ENCODE measurements at regions of chr2 and their contacts with region 1.

Region 1: GRCh38 chr2:207529330-207530159 is at the start of gene CREB1:
- DNase-seq: peak; percentile 94
- ATAC-seq: peak; percentile 96
- H3K4me3 ChIP-seq: peak within 1 kb of the TSS; percentile 93 to 98 (median 94)
- H3K27ac ChIP-seq: peak within 1 kb of the TSS; percentile 96
- H3K4me1 ChIP-seq: peaks cover 44% of the 10 kb centered on the region
- H3K27me3 ChIP-seq: no peaks in the 10 kb centered on the region; a peak in 1 of 5 replicates
- CTCF ChIP-seq: peak; percentile 73
- EP300 ChIP-seq: no peak; a peak in 1 of 4 replicates
- POLR2A ChIP-seq: peak; percentile 90 to 94
- RAD21 ChIP-seq: peak; percentile 30
- total RNA-seq, gene CREB1: 51.9 and 79.5 TPM in 2 replicates

Region 2: DNA sequence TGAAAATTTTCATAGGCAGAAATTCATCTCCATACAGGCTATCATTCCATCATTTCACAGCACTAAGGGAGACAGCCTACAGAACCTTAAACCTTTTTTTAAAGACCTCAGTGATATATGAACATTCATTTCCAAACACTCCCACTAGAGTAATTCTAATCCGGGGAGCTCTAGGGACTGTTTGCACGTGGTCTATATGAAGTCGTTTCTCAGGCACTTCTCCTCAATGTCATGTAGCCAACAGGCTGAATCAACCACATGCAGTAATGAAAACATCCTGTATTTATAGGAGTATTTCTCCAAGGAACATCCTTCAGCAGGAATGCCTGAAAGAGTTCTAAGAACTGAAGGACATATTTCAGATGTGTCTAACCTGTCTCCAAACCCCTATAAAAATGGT is 97.1 kb before region 1 on chr2:
- CTCF ChIA-PET with region 1: no interaction called
- POLR2A ChIA-PET with region 1: no interaction called
- in situ Hi-C with region 1: no loop called
- intact Hi-C with region 1: no loop called
- DNase-seq: no peak
- ATAC-seq: no peak
- H3K4me3 ChIP-seq: no peak overlapping the region
- H3K27ac ChIP-seq: no peak overlapping the region
- H3K4me1 ChIP-seq: no peaks in the 10 kb centered on the region
- H3K27me3 ChIP-seq: no peaks in the 10 kb centered on the region
- CTCF ChIP-seq: no peak
- EP300 ChIP-seq: no peak
- POLR2A ChIP-seq: no peak
- RAD21 ChIP-seq: no peak

Region 3: DNA sequence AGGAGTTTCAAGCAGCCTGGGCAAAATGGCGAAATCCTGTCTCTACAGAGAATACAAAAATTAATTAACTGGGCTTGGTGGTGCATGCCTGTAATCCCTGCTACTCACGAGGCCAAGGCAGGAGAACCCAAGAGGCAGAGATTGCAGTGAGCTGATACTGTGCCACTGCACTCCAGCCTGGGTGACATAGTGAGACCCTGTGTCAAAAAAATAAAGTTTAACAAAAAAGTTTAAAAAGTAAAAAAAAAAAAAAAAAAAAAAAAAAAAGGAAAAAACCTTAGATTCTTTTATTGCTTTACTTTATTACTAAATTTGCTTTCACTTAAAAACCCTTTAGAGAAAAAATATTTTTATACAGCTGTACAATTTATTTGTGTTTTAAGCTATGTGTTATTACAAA is 10.9 kb after region 1 on chr2:
- CTCF ChIA-PET with region 1: no interaction called
- POLR2A ChIA-PET with region 1: interaction called, 23 read pairs
- in situ Hi-C with region 1: no loop called
- intact Hi-C with region 1: no loop called
- DNase-seq: no peak
- ATAC-seq: peak; percentile 49
- H3K4me3 ChIP-seq: no peak overlapping the region
- H3K27ac ChIP-seq: no peak overlapping the region
- H3K4me1 ChIP-seq: no peaks in the 10 kb centered on the region
- H3K27me3 ChIP-seq: no peaks in the 10 kb centered on the region
- CTCF ChIP-seq: no peak
- EP300 ChIP-seq: no peak
- POLR2A ChIP-seq: no peak
- RAD21 ChIP-seq: no peak

Region 4: GRCh38 chr2:207546822-207547221 is 17.3 kb after region 1 on chr2:
- CTCF ChIA-PET with region 1: no interaction called
- POLR2A ChIA-PET with region 1: interaction called, 24 read pairs
- in situ Hi-C with region 1: no loop called
- intact Hi-C with region 1: no loop called
- DNase-seq: no peak
- ATAC-seq: no peak
- H3K4me3 ChIP-seq: no peak overlapping the region
- H3K27ac ChIP-seq: no peak overlapping the region
- H3K4me1 ChIP-seq: no peaks in the 10 kb centered on the region
- H3K27me3 ChIP-seq: no peaks in the 10 kb centered on the region
- CTCF ChIP-seq: no peak
- EP300 ChIP-seq: no peak
- POLR2A ChIP-seq: no peak
- RAD21 ChIP-seq: no peak

Region 5: GRCh38 chr2:207571370-207571769 is 41.8 kb after region 1 on chr2:
- CTCF ChIA-PET with region 1: no interaction called
- POLR2A ChIA-PET with region 1: no interaction called
- in situ Hi-C with region 1: no loop called
- intact Hi-C with region 1: loop called (anchors 5 kb)
- DNase-seq: no peak
- ATAC-seq: no peak
- H3K4me3 ChIP-seq: no peak overlapping the region
- H3K27ac ChIP-seq: no peak overlapping the region
- H3K4me1 ChIP-seq: no peaks in the 10 kb centered on the region
- H3K27me3 ChIP-seq: no peaks in the 10 kb centered on the region
- CTCF ChIP-seq: no peak
- EP300 ChIP-seq: no peak
- POLR2A ChIP-seq: no peak
- RAD21 ChIP-seq: no peak

Region 6: GRCh38 chr2:207725873-207726578 is 196.5 kb after region 1 on chr2:
- CTCF ChIA-PET with region 1: no interaction called
- POLR2A ChIA-PET with region 1: no interaction called
- in situ Hi-C with region 1: loop called (anchors 10 kb)
- intact Hi-C with region 1: no loop called
- DNase-seq: no peak
- ATAC-seq: peak; percentile 35; the same call in 2 of the 3 replicates
- H3K4me3 ChIP-seq: no peak overlapping the region
- H3K27ac ChIP-seq: peak overlapping the region; percentile 8
- H3K4me1 ChIP-seq: peaks cover 15% of the 10 kb centered on the region
- H3K27me3 ChIP-seq: no peaks in the 10 kb centered on the region
- CTCF ChIP-seq: no peak
- EP300 ChIP-seq: no peak
- POLR2A ChIP-seq: no peak
- RAD21 ChIP-seq: no peak

Region 7: GRCh38 chr2:207734264-207734635 is 204.7 kb after region 1 on chr2:
- CTCF ChIA-PET with region 1: no interaction called
- POLR2A ChIA-PET with region 1: interaction called, 16 read pairs
- in situ Hi-C with region 1: loop called (anchors 10 kb)
- intact Hi-C with region 1: loop called (anchors 2 kb)
- DNase-seq: peak; percentile 75
- ATAC-seq: peak; percentile 94
- H3K4me3 ChIP-seq: peak overlapping the region; percentile 29 to 50 (median 40); a peak in 4 of 6 replicates
- H3K27ac ChIP-seq: peak overlapping the region; percentile 89
- H3K4me1 ChIP-seq: peaks cover 34% of the 10 kb centered on the region
- H3K27me3 ChIP-seq: no peaks in the 10 kb centered on the region
- CTCF ChIP-seq: peak; percentile 92
- EP300 ChIP-seq: no peak
- POLR2A ChIP-seq: no peak
- RAD21 ChIP-seq: peak; percentile 89

Region 8: DNA sequence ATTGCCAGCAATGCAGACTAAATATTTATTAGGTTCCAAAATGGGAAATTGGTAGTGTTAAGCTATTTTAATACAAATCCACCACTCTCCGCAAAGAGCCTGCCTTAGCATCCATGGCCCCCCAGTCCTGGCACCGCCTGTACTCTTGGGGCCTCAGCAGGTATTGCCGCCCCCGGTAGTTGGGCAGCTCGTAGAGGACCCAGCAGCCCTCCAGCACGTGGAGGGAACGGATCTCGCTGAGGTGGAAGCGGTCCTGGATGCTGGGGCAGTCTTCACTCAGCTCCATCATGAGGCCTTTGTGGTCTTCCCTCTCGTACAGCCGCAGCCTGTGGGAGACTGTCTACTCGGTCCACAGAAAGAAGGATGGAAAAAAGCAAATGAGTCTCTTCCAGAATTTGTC is 598.6 kb after region 1 on chr2:
- CTCF ChIA-PET with region 1: no interaction called
- POLR2A ChIA-PET with region 1: no interaction called
- in situ Hi-C with region 1: no loop called
- intact Hi-C with region 1: no loop called
- DNase-seq: no peak
- ATAC-seq: no peak
- H3K4me3 ChIP-seq: no peak overlapping the region
- H3K27ac ChIP-seq: no peak overlapping the region
- H3K4me1 ChIP-seq: peaks cover 28% of the 10 kb centered on the region
- H3K27me3 ChIP-seq: no peaks in the 10 kb centered on the region
- CTCF ChIP-seq: no peak
- EP300 ChIP-seq: no peak
- POLR2A ChIP-seq: no peak
- RAD21 ChIP-seq: no peak